Ovary (tissue), 10 donors: ENCODE measurements at regions of chr17 and their contacts with region 1.

Region 1: GRCh38 chr17:16438557-16439302 is 23.4 kb downstream of the TRPV2 start:
- DNase-seq: peak; percentile 95 to 97 (median 95)
- H3K4me3 ChIP-seq: peak overlapping the region; percentile 63
- H3K27ac ChIP-seq: peak overlapping the region; percentile 66 to 74
- H3K4me1 ChIP-seq: peaks cover 14% of the 10 kb centered on the region
- H3K27me3 ChIP-seq: no peaks in the 10 kb centered on the region
- CTCF ChIP-seq: peak in 1 of 3 donors; percentile 9
- EP300 ChIP-seq: no peak
- POLR2A ChIP-seq: peak; percentile 55

Region 2: GRCh38 chr17:16285957-16286640 is 152.6 kb before region 1 on chr17:
- intact Hi-C with region 1: no loop called
- DNase-seq: peak; percentile 80 to 86 (median 86)
- H3K4me3 ChIP-seq: peak overlapping the region; percentile 21
- H3K27ac ChIP-seq: peak overlapping the region; percentile 82 to 93
- H3K4me1 ChIP-seq: peaks cover 16% of the 10 kb centered on the region
- H3K27me3 ChIP-seq: no peaks in the 10 kb centered on the region
- CTCF ChIP-seq: peak in 2 of 3 donors; percentile 26 to 47
- EP300 ChIP-seq: peak; percentile 23
- POLR2A ChIP-seq: peak; percentile 49

Region 3: DNA sequence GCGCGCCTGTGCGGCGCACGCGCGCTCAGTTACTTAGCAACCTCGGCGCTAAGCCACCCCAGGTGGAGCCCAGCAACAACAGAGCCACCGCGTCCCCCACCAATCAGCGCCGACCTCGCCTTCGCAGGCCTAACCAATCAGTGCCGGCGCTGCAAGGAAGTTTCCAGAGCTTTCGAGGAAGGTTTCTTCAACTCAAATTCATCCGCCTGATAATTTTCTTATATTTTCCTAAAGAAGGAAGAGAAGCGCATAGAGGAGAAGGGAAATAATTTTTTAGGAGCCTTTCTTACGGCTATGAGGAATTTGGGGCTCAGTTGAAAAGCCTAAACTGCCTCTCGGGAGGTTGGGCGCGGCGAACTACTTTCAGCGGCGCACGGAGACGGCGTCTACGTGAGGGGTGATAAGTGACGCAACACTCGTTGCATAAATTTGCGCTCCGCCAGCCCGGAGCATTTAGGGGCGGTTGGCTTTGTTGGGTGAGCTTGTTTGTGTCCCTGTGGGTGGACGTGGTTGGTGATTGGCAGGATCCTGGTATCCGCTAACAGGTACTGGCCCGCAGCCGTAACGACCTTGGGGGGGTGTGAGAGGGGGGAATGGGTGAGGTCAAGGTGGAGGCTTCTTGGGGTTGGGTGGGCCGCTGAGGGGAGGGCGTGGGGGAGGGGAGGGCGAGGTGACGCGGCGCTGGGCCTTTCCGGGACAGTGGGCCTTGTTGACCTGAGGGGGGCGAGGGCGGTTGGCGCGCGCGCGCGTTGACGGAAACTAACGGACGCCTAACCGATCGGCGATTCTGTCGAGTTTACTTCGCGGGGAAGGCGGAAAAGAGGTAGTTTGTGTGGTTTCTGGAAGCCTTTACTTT is 57.9 kb before region 1 on chr17 and contains the start of gene UBB:
- intact Hi-C with region 1: loop called in 1 of 4 experiments (anchors 10 kb)
- DNase-seq: peak; percentile 88 to 93 (median 91)
- H3K4me3 ChIP-seq: peak within 1 kb of the TSS; percentile 60
- H3K27ac ChIP-seq: peak within 1 kb of the TSS; percentile 87 to 88
- H3K4me1 ChIP-seq: no peaks in the 10 kb centered on the region
- H3K27me3 ChIP-seq: no peaks in the 10 kb centered on the region
- CTCF ChIP-seq: peak in 2 of 3 donors; percentile 8 to 20
- EP300 ChIP-seq: peak; percentile 59
- POLR2A ChIP-seq: peak; percentile 91
- total RNA-seq, gene UBB: 445 to 993 (median 806) TPM

Region 4: DNA sequence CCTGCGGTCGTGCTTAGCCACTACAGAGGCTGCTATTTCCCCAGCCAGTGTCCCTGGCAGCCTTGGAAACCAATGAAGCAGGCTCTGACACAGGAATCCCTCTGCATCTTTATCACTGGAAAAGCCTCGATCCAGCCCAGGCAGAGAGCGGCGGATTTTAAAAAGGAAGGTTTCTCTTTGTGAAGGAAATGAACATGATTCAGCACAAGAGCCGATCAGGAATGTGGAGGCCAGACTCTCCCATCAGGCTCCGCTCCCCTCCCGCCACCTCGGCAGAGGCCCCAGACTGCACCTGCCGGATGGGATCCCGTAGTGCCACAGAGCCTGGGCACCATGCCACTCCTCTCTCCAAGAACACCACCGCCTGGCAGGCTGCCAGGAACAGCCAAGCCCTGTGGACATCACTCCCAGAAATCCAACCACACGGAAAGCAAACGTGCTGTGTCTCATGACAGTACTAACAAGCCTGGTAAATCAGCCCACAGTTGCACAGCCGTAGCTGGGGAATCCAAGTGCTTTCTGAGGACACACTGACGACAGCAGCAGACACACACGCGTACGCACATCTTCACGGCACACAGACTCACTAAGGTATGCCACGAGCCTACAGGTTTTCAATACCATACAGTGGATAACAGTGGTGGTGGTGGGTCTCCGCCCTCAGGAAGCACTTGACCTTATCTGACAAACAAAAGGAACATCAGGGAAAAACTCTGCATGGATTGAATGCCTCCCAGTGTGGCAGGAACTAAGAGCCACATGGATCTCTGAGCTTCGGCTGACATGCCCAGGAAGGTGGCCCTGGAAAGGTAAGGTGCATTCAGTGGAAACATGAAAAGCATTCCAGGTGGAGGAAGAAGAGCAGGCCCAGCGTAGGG is 47.9 kb after region 1 on chr17:
- intact Hi-C with region 1: loop called in 1 of 4 experiments (anchors 5 kb)
- DNase-seq: peak; percentile 66 to 81 (median 73)
- H3K4me3 ChIP-seq: no peak overlapping the region
- H3K27ac ChIP-seq: no peak overlapping the region
- H3K4me1 ChIP-seq: peaks cover 31% of the 10 kb centered on the region
- H3K27me3 ChIP-seq: no peaks in the 10 kb centered on the region
- CTCF ChIP-seq: no peak
- EP300 ChIP-seq: no peak
- POLR2A ChIP-seq: no peak